ENCODE measurements at regions of chr4 and their contacts with region 1.

Region 1: GRCh38 chr4:176377780-176378179 is 58.0 kb downstream of the SPCS3 start:
- DNase-seq: peak; percentile 27
- ATAC-seq: peak; percentile 69
- H3K4me3 ChIP-seq: no peak overlapping the region
- H3K27ac ChIP-seq: no peak overlapping the region
- H3K4me1 ChIP-seq: no peaks in the 10 kb centered on the region
- H3K27me3 ChIP-seq: no peaks in the 10 kb centered on the region
- CTCF ChIP-seq: peak; percentile 28 to 69 (median 47); a peak in 4 of 6 replicates
- POLR2A ChIP-seq: no peak
- RAD21 ChIP-seq: peak; percentile 78

Region 2: GRCh38 chr4:176150356-176150682 is 227.5 kb before region 1 on chr4:
- CTCF ChIA-PET with region 1: no interaction called
- POLR2A ChIA-PET with region 1: no interaction called
- RAD21 ChIA-PET with region 1: no interaction called
- intact Hi-C with region 1: no loop called
- DNase-seq: peak; percentile 23
- ATAC-seq: peak; percentile 55; the same call in 1 of the 2 replicates
- H3K4me3 ChIP-seq: no peak overlapping the region
- H3K27ac ChIP-seq: no peak overlapping the region
- H3K4me1 ChIP-seq: no peaks in the 10 kb centered on the region
- H3K27me3 ChIP-seq: no peaks in the 10 kb centered on the region
- CTCF ChIP-seq: peak; percentile 19 to 73 (median 58); a peak in 5 of 6 replicates
- POLR2A ChIP-seq: no peak
- RAD21 ChIP-seq: peak; percentile 82

Region 3: DNA sequence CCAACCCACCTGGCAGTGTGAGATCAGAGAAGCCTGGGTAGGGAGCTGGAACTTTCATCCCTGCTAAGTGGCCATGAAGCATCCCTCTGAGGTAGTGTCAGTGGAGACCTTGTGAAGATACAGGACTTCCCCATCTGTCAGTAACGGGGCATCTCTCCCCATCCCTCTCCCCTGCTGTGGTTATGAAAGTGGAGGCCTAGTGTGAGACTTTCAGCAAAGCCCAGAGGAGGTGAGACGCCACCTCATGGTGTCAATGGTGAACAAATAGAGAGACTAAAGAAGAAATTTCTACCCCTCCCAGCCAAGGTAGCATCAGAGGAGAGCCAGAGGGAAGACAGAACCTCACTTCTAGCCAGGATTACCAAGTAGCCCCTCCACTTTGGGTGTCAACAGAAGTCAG is 264.7 kb after region 1 on chr4:
- CTCF ChIA-PET with region 1: no interaction called
- POLR2A ChIA-PET with region 1: no interaction called
- RAD21 ChIA-PET with region 1: no interaction called
- intact Hi-C with region 1: loop called (anchors 10 kb)
- DNase-seq: no peak
- ATAC-seq: peak; percentile 30; the same call in 1 of the 2 replicates
- H3K4me3 ChIP-seq: no peak overlapping the region
- H3K27ac ChIP-seq: no peak overlapping the region
- H3K4me1 ChIP-seq: no peaks in the 10 kb centered on the region
- H3K27me3 ChIP-seq: no peaks in the 10 kb centered on the region
- CTCF ChIP-seq: no peak
- POLR2A ChIP-seq: no peak
- RAD21 ChIP-seq: peak; percentile 33; the same call in 1 of the 2 replicates

Region 4: DNA sequence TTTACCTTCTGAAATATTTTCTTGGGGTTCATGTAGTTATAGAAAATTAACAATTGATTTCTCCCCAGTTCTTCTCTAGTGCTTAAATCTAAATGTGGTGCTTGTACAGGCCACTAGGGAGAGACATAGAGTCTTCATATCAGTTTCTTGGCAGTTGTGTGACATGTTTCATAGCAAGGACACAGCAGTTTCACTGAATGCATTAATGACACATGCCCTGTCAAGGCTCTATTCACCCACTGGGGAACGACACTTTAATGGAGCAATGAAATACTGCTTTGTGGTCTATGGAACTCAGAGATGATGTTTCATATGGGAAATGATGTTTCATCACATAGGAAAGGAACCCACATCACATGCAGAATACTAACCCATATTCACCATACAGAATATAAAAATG is 412.2 kb after region 1 on chr4:
- CTCF ChIA-PET with region 1: no interaction called
- POLR2A ChIA-PET with region 1: no interaction called
- RAD21 ChIA-PET with region 1: no interaction called
- intact Hi-C with region 1: loop called (anchors 5 kb)
- DNase-seq: peak; percentile 23
- ATAC-seq: peak; percentile 78
- H3K4me3 ChIP-seq: no peak overlapping the region
- H3K27ac ChIP-seq: no peak overlapping the region
- H3K4me1 ChIP-seq: no peaks in the 10 kb centered on the region
- H3K27me3 ChIP-seq: no peaks in the 10 kb centered on the region
- CTCF ChIP-seq: peak; percentile 43 to 72 (median 61); a peak in 5 of 6 replicates
- POLR2A ChIP-seq: no peak
- RAD21 ChIP-seq: peak; percentile 61

Region 5: GRCh38 chr4:177250056-177250696 is 872.4 kb after region 1 on chr4:
- CTCF ChIA-PET with region 1: no interaction called
- POLR2A ChIA-PET with region 1: no interaction called
- RAD21 ChIA-PET with region 1: no interaction called
- intact Hi-C with region 1: loop called (anchors 1 kb)
- DNase-seq: peak; percentile 59
- ATAC-seq: peak; percentile 99
- H3K4me3 ChIP-seq: peak overlapping the region in 1 of 2 experiments; percentile 31; a peak in 2 of 4 replicates
- H3K27ac ChIP-seq: no peak overlapping the region
- H3K4me1 ChIP-seq: peaks cover 0 to 4% of the 10 kb centered on the region in 2 experiments; a peak in 2 of 4 replicates
- H3K27me3 ChIP-seq: no peaks in the 10 kb centered on the region
- CTCF ChIP-seq: peak; percentile 74 to 99 (median 98)
- POLR2A ChIP-seq: no peak
- RAD21 ChIP-seq: peak; percentile 99

Region 6: GRCh38 chr4:177339477-177340374 is 961.9 kb after region 1 on chr4:
- CTCF ChIA-PET with region 1: no interaction called
- POLR2A ChIA-PET with region 1: no interaction called
- RAD21 ChIA-PET with region 1: no interaction called
- intact Hi-C with region 1: loop called (anchors 2 kb)
- DNase-seq: peak; percentile 4
- ATAC-seq: peak; percentile 78
- H3K4me3 ChIP-seq: no peak overlapping the region
- H3K27ac ChIP-seq: no peak overlapping the region
- H3K4me1 ChIP-seq: no peaks in the 10 kb centered on the region
- H3K27me3 ChIP-seq: no peaks in the 10 kb centered on the region
- CTCF ChIP-seq: peak; percentile 51 to 62 (median 52); a peak in 5 of 6 replicates
- POLR2A ChIP-seq: no peak
- RAD21 ChIP-seq: peak; percentile 60

Region 7: GRCh38 chr4:177638871-177639270 is 1261.1 kb after region 1 on chr4:
- CTCF ChIA-PET with region 1: no interaction called
- POLR2A ChIA-PET with region 1: no interaction called
- RAD21 ChIA-PET with region 1: no interaction called
- intact Hi-C with region 1: no loop called
- DNase-seq: no peak
- ATAC-seq: no peak
- H3K4me3 ChIP-seq: no peak overlapping the region
- H3K27ac ChIP-seq: no peak overlapping the region
- H3K4me1 ChIP-seq: no peaks in the 10 kb centered on the region
- H3K27me3 ChIP-seq: no peaks in the 10 kb centered on the region
- CTCF ChIP-seq: no peak
- POLR2A ChIP-seq: no peak
- RAD21 ChIP-seq: no peak

Measured in HCT116 (cell line).